ENCODE measurements at regions of chr17 and their contacts with region 1.

Region 1: GRCh38 chr17:10844621-10845387 is 6.9 kb upstream of the PIRT start:
- DNase-seq: peak; percentile 75 to 84
- ATAC-seq: peak; percentile 94 to 99 (median 95)
- H3K4me3 ChIP-seq: peak overlapping the region; percentile 64
- H3K27ac ChIP-seq: no peak overlapping the region
- H3K4me1 ChIP-seq: no peaks in the 10 kb centered on the region
- H3K27me3 ChIP-seq: peaks cover 0 to 2% (median 0%) of the 10 kb centered on the region in 3 donors
- CTCF ChIP-seq: peak; percentile 96

Region 2: GRCh38 chr17:9924735-9925191 is 920.0 kb before region 1 on chr17:
- intact Hi-C with region 1: loop called in 1 of 2 experiments (anchors 5 kb)
- DNase-seq: no peak
- ATAC-seq: peak; percentile 69 to 80 (median 72)
- H3K4me3 ChIP-seq: no peak overlapping the region
- H3K27ac ChIP-seq: no peak overlapping the region
- H3K4me1 ChIP-seq: no peaks in the 10 kb centered on the region
- H3K27me3 ChIP-seq: no peaks in the 10 kb centered on the region
- CTCF ChIP-seq: peak; percentile 87

Region 3: DNA sequence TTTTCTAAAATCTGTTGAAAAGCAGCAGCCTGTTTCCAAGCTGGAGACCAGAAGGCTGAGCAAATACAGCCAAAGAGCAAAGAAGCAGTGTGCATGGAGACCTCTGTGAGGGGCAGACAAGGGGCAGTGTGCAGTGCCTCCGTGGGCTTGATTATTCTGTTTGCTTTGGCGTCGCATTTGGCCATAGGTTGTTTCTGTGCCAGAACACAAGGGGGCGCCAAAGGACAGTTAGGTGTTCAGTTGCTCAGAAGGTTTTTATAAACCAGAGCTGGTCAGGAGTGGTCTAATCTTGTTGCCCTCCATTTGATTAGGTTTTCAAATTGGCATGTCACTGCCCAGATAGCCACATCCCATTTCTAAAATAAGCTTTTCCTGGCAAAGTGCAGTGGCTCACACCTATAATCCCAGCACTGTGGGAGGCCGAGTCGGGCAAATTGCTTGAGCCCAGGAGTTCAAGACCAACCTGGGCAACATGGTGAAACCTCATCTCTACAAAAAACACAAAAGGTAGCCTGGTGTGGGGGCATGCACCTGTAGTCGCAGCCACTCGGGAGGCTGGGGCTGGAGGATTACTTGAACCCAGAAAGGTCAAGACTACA is 198.3 kb before region 1 on chr17:
- intact Hi-C with region 1: loop called (anchors 1 to 5 kb)
- DNase-seq: peak; percentile 65 to 82
- ATAC-seq: peak; percentile 72 to 89 (median 82)
- H3K4me3 ChIP-seq: no peak overlapping the region
- H3K27ac ChIP-seq: no peak overlapping the region
- H3K4me1 ChIP-seq: no peaks in the 10 kb centered on the region
- H3K27me3 ChIP-seq: no peaks in the 10 kb centered on the region
- CTCF ChIP-seq: peak; percentile 87

Region 4: GRCh38 chr17:10737168-10737622 is 107.6 kb before region 1 on chr17:
- intact Hi-C with region 1: loop called (anchors 1 to 2 kb)
- DNase-seq: peak; percentile 34 to 69
- ATAC-seq: peak; percentile 80 to 91 (median 88)
- H3K4me3 ChIP-seq: no peak overlapping the region
- H3K27ac ChIP-seq: no peak overlapping the region
- H3K4me1 ChIP-seq: no peaks in the 10 kb centered on the region
- H3K27me3 ChIP-seq: no peaks in the 10 kb centered on the region
- CTCF ChIP-seq: peak; percentile 72

Region 5: GRCh38 chr17:11130368-11130767 is 285.6 kb after region 1 on chr17:
- intact Hi-C with region 1: no loop called
- DNase-seq: no peak
- ATAC-seq: no peak
- H3K4me3 ChIP-seq: no peak overlapping the region
- H3K27ac ChIP-seq: no peak overlapping the region
- H3K4me1 ChIP-seq: no peaks in the 10 kb centered on the region
- H3K27me3 ChIP-seq: no peaks in the 10 kb centered on the region
- CTCF ChIP-seq: no peak